CD14-positive monocyte (primary cell): ENCODE measurements at regions of chr4 and their contacts with region 1.

Region 1: DNA sequence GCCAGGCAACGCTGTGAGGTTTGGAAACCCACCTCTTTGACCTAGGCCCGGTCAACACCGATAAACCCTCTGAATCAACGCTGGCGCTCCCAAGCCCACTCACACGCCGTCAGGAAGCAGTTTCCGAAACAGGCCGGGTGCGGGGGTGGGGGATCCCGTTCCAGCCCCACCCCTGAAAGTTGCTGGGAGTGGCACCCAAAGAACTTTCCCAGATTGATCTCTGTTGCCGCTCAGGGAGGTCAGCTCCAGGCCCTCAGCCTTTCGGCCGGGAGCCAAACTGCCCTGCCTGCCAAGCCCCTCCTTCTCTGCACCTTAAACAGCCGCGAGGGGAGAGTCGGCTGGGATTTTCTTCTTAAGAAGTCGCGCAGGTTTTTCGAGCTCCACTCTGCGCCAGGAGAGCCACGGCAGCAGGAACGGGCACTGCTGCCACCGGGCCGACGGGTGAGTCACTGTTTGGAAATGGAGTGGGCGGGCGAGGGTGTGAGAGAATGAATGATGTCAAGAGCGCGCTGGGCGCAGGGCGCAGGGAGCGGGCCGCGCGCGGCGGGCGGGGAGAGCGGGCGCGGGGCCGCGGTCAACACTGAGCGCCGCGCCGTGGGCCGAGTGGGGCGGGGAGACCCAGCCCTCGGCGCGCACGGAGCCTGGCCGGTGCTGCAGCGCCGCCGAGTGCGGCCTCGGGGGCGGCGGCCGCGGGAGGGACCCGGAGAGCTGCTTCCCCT is at the start of gene SGMS2:
- DNase-seq: peak; percentile 89 to 93 (median 89)
- H3K4me3 ChIP-seq: peak within 1 kb of the TSS; percentile 85 to 98 (median 91)
- H3K4me3 Mint-ChIP-seq: peak within 1 kb of the TSS; percentile 99 to 100
- H3K27ac ChIP-seq: peak within 1 kb of the TSS; percentile 100
- H3K27ac Mint-ChIP-seq: peak within 1 kb of the TSS; percentile 97 to 100 (median 99)
- H3K4me1 ChIP-seq: peaks cover 46 to 58% of the 10 kb centered on the region in 2 donors
- H3K4me1 Mint-ChIP-seq: peaks cover 57% of the 10 kb centered on the region
- H3K27me3 ChIP-seq: no peaks in the 10 kb centered on the region
- H3K27me3 Mint-ChIP-seq: peaks cover 0 to 8% (median 1%) of the 10 kb centered on the region in 3 donors
- CTCF ChIP-seq: no peak
- polyA plus RNA-seq, gene SGMS2: 20.8 to 32.7 (median 23.0) TPM

Region 2: DNA sequence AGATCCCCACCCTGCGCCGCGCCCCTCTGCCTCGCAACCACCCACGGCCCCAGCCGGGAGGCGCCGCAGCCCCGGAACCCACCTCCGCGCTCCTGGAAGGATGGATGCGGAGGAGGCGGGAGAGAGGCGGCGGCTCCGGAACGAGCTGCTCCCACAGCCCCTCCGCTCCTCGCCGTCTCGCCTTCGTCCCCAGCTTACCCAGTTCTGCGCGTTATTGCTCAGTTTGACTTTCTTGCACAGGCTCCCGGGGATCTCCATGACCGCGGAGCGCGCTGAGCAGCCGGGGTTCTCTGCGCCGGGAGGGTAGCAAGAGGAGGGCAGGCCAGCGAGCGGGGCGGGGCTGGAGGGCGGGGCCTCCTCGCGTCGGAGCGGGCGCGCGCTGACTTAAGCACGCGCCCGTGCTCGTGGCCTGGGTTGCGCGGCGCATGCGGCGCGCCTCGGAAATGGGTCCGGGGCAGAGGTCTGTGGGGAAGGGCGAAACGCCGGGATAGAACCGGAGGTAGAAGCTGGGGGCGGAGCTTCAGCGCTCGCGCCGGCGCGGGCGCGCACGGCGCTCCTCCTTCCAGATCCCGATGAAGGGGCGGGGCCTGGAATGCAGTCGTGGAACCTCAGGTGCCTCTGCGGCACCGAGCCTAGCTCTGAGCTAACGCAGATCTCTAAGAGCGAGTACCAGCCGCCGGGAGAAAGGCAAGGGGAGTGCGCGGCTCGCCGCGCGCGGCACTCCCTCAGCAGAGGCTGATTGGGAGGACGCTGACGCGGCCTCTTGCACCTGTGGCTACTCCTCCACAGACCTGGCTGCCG is 104.4 kb before region 1 on chr4 and contains the start of gene PAPSS1:
- intact Hi-C with region 1: loop called in 1 of 2 experiments (anchors 10 kb)
- DNase-seq: peak; percentile 94 to 97 (median 95)
- H3K4me3 ChIP-seq: peak within 1 kb of the TSS; percentile 83 to 88 (median 87)
- H3K4me3 Mint-ChIP-seq: peak within 1 kb of the TSS; percentile 95 to 97
- H3K27ac ChIP-seq: peak within 1 kb of the TSS; percentile 79 to 81
- H3K27ac Mint-ChIP-seq: peak within 1 kb of the TSS; percentile 91 to 97 (median 94)
- H3K4me1 ChIP-seq: peaks cover 25 to 37% of the 10 kb centered on the region in 2 donors
- H3K4me1 Mint-ChIP-seq: peaks cover 35% of the 10 kb centered on the region
- H3K27me3 ChIP-seq: no peaks in the 10 kb centered on the region
- H3K27me3 Mint-ChIP-seq: peaks cover 3 to 9% (median 6%) of the 10 kb centered on the region in 3 donors
- CTCF ChIP-seq: no peak
- polyA plus RNA-seq, gene PAPSS1: 46.4 to 79.6 (median 64.8) TPM

Region 3: GRCh38 chr4:107838861-107839565 is 14.5 kb after region 1 on chr4:
- intact Hi-C with region 1: loop called (anchors 2 kb)
- DNase-seq: peak; percentile 42 to 80 (median 68)
- H3K4me3 ChIP-seq: peak overlapping the region in 2 of 3 experiments; percentile 34 to 62
- H3K4me3 Mint-ChIP-seq: no peak overlapping the region
- H3K27ac ChIP-seq: peak overlapping the region; percentile 59 to 88
- H3K27ac Mint-ChIP-seq: no peak overlapping the region
- H3K4me1 ChIP-seq: peaks cover 84 to 97% of the 10 kb centered on the region in 2 donors
- H3K4me1 Mint-ChIP-seq: peaks cover 56% of the 10 kb centered on the region
- H3K27me3 ChIP-seq: no peaks in the 10 kb centered on the region
- H3K27me3 Mint-ChIP-seq: peaks cover 0 to 1% (median 0%) of the 10 kb centered on the region in 3 donors
- CTCF ChIP-seq: no peak

Region 4: GRCh38 chr4:107870916-107871786 is 46.6 kb after region 1 on chr4:
- intact Hi-C with region 1: loop called in 1 of 2 experiments (anchors 10 kb)
- DNase-seq: no peak
- H3K4me3 ChIP-seq: no peak overlapping the region
- H3K4me3 Mint-ChIP-seq: no peak overlapping the region
- H3K27ac ChIP-seq: no peak overlapping the region
- H3K27ac Mint-ChIP-seq: peak overlapping the region in 2 of 7 donors; percentile 9 to 60
- H3K4me1 ChIP-seq: peaks cover 5 to 7% of the 10 kb centered on the region in 2 donors
- H3K4me1 Mint-ChIP-seq: peaks cover 14% of the 10 kb centered on the region
- H3K27me3 ChIP-seq: no peaks in the 10 kb centered on the region
- H3K27me3 Mint-ChIP-seq: no peaks in the 10 kb centered on the region
- CTCF ChIP-seq: no peak

Region 5: GRCh38 chr4:107913281-107913899 is 88.9 kb after region 1 on chr4:
- intact Hi-C with region 1: loop called in 1 of 2 experiments (anchors 10 kb)
- DNase-seq: peak; percentile 60 to 74 (median 67)
- H3K4me3 ChIP-seq: no peak overlapping the region
- H3K4me3 Mint-ChIP-seq: no peak overlapping the region
- H3K27ac ChIP-seq: peak overlapping the region in 1 of 2 donors; percentile 42
- H3K27ac Mint-ChIP-seq: peak overlapping the region in 4 of 7 donors; percentile 12 to 79 (median 42)
- H3K4me1 ChIP-seq: peaks cover 2 to 14% of the 10 kb centered on the region in 2 donors
- H3K4me1 Mint-ChIP-seq: peaks cover 13% of the 10 kb centered on the region
- H3K27me3 ChIP-seq: no peaks in the 10 kb centered on the region
- H3K27me3 Mint-ChIP-seq: no peaks in the 10 kb centered on the region
- CTCF ChIP-seq: peak; percentile 88

Region 6: DNA sequence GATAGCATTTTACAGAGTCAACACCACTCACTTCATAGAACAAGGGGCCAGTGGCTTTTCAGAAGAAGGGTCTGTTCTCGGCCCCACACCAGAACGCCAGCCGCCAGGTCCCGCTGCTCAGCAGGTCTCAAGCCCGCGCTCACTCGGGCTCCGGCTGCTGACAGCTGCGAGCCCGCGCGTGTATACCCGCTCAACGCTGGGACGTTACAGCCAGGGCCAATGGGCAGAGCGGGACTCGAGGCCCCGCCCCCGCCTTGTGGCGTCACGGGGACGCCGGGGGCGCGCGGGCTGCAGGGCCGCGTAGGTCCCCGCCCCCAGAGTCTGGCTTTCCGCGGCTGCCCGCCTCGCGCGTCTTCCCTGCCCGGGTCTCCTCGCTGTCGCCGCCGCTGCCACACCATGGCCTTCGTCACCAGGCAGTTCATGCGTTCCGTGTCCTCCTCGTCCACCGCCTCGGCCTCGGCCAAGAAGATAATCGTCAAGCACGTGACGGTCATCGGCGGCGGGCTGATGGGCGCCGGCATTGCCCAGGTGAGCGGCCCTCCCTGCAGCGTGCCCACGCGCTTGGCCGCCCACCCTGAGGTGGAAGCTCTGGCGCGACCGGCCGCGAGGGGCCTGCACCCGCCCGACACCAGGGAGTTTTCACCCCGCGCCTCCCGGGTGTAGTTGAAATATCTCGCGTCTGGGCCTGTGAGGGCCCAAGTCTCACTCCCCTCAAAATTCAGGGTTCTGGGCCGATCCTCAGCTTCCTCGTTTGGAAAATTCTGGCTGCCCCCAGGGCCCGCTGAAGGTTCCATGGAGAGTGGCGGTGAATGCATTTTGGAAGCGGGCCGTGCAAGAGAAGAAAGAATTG is 165.2 kb after region 1 on chr4 and contains the start of gene HADH:
- intact Hi-C with region 1: loop called (anchors 10 kb)
- DNase-seq: peak; percentile 88 to 90 (median 90)
- H3K4me3 ChIP-seq: peak within 1 kb of the TSS; percentile 51 to 88 (median 84)
- H3K4me3 Mint-ChIP-seq: peak within 1 kb of the TSS; percentile 98 to 99
- H3K27ac ChIP-seq: peak within 1 kb of the TSS; percentile 15 to 83
- H3K27ac Mint-ChIP-seq: peak within 1 kb of the TSS; percentile 78 to 93 (median 88)
- H3K4me1 ChIP-seq: peaks cover 20 to 29% of the 10 kb centered on the region in 2 donors
- H3K4me1 Mint-ChIP-seq: peaks cover 45% of the 10 kb centered on the region
- H3K27me3 ChIP-seq: no peaks in the 10 kb centered on the region
- H3K27me3 Mint-ChIP-seq: no peaks in the 10 kb centered on the region
- CTCF ChIP-seq: no peak
- polyA plus RNA-seq, gene HADH: 8.4 to 19.4 (median 19.4) TPM